Activated B cell treated with CpG ODN at 0.5 μM for 24 hours (primary cell): ENCODE measurements at regions of chr12 and their contacts with region 1.

Region 1: GRCh38 chr12:115916910-115917668 is 360.4 kb downstream of the MED13L start:
- DNase-seq: peak; percentile 64
- ATAC-seq: peak; percentile 58
- H3K4me3 Mint-ChIP-seq: peak overlapping the region; percentile 38
- H3K27ac Mint-ChIP-seq: no peak overlapping the region
- H3K4me1 Mint-ChIP-seq: peaks cover 2% of the 10 kb centered on the region
- H3K27me3 Mint-ChIP-seq: peaks cover 50% of the 10 kb centered on the region
- CTCF ChIP-seq: peak; percentile 80

Region 2: DNA sequence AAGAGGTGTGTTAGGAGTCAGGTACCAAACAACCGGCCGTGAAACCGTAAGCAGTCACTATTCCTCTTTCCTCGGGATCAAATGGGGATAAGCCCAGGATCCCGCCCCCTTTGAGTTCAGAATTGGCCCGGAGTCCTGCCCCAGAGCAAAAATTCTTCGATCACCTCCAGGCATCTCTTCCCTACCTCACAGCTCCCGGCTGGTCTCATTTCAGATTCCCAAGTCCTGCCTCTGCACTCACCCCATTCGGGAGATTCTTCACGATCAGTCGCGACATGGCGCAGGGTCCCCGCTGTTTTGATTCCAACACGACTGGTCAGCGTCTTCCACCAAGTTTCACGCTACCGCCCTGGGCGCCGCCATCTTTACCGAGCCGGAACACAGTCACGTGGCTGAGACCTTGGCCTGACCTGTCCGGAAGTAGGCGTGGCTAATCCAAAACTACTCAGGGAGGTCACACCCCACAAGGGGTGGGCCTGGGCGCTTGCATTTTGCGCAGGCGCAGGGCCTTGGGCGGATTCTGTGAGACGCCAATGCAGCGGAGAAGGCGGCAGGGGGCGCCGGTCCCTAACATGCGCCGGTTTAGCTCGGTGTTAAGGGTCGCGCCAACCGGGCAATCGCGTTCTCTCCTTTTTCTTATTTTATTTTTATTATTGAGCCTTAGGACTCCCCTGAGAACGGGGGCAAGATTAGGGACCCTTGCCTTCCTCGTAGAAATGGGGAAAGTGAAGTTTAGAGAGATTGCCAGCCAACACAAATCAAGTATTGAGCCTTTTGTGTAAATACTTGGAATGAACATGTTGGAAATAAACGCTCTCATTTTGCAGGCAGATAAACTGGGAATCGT is 1950.9 kb before region 1 on chr12 and contains the start of gene RBM19:
- CTCF ChIA-PET with region 1: interaction called, 5 read pairs
- POLR2A ChIA-PET with region 1: no interaction called
- intact Hi-C with region 1: loop called (anchors 1 kb)
- DNase-seq: peak; percentile 90
- ATAC-seq: peak; percentile 98
- H3K4me3 Mint-ChIP-seq: peak within 1 kb of the TSS; percentile 100
- H3K27ac Mint-ChIP-seq: peak within 1 kb of the TSS; percentile 95
- H3K4me1 Mint-ChIP-seq: peaks cover 44% of the 10 kb centered on the region
- H3K27me3 Mint-ChIP-seq: peaks cover 6% of the 10 kb centered on the region
- CTCF ChIP-seq: peak; percentile 54
- total RNA-seq, gene RBM19: 77.0 and 79.9 TPM in 2 replicates